GM12878 (cell line): ENCODE measurements at regions of chr10 and their contacts with region 1.

Region 1: DNA sequence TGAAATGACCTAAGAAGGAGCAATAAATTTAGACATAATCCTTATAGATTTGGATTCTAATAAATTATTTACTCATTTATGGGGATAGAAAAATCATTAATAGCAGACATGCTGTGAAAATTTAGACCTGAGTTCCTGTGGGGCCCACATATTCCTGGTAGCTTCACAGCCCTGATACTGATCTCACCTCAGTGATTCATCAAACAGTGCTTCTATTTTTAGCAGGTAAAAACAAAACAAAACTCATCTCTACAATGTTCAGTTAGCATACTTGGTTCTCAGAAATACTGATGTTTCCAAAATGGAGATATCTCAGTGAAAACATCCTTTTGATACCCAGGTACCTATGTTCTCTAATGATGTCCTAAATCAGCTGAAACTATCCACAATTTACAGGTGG is 841.1 kb upstream of the SORCS1 start:
- DNase-seq: no peak
- ATAC-seq: 0 out of 3 replicates have a peak, but pooled peaks have one; percentile 21
- H3K4me3 ChIP-seq: no peak overlapping the region
- H3K27ac ChIP-seq: no peak overlapping the region
- H3K4me1 ChIP-seq: no peaks in the 10 kb centered on the region; the same call in 1 of the 2 replicates
- H3K27me3 ChIP-seq: no peaks in the 10 kb centered on the region
- CTCF ChIP-seq: no peak
- EP300 ChIP-seq: no peak
- POLR2A ChIP-seq: no peak
- RAD21 ChIP-seq: no peak

Region 2: DNA sequence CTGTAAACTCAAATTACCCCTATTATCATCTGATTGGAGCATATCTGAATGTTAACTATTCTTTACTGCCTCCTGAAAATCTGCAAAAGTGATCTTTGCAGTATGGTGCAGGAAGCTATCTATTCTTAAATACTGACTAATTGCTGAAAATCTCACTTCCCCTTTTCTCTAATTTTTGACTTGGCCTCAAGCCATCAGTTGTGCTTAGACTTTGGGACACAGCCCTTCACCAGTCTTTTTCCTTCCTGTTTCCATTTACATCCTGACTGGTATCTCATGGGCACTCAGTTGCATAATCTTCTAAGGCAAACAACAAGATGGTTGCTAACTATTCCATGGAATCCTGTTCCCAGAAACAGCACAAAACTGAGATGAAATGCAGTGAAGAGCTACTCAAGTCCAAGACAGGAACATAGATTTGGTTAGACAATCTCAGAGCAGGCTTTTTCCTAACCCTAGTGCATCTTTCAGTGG is 1069.6 kb before region 1 on chr10:
- CTCF ChIA-PET with region 1: no interaction called
- POLR2A ChIA-PET with region 1: no interaction called
- RAD21 ChIA-PET with region 1: no interaction called
- SMC1A ChIA-PET with region 1: no interaction called
- in situ Hi-C with region 1: no loop called
- intact Hi-C with region 1: loop called (anchors 5 kb)
- DNase-seq: peak; percentile 93
- ATAC-seq: peak; percentile 75
- H3K4me3 ChIP-seq: no peak overlapping the region; the same call in 1 of the 2 replicates
- H3K27ac ChIP-seq: peak overlapping the region; percentile 67
- H3K4me1 ChIP-seq: peaks cover 42% of the 10 kb centered on the region
- H3K27me3 ChIP-seq: no peaks in the 10 kb centered on the region
- CTCF ChIP-seq: no peak
- EP300 ChIP-seq: peak; percentile 38 to 97; a peak in 3 of 4 replicates
- POLR2A ChIP-seq: no peak
- RAD21 ChIP-seq: no peak

Region 3: GRCh38 chr10:107914450-107915214 is 91.0 kb before region 1 on chr10:
- CTCF ChIA-PET with region 1: no interaction called
- POLR2A ChIA-PET with region 1: no interaction called
- RAD21 ChIA-PET with region 1: interaction called, 8 read pairs
- SMC1A ChIA-PET with region 1: interaction called, 10 read pairs
- in situ Hi-C with region 1: no loop called
- intact Hi-C with region 1: loop called (anchors 5 kb)
- DNase-seq: no peak
- ATAC-seq: peak; percentile 73
- H3K4me3 ChIP-seq: no peak overlapping the region
- H3K27ac ChIP-seq: no peak overlapping the region
- H3K4me1 ChIP-seq: no peaks in the 10 kb centered on the region
- H3K27me3 ChIP-seq: no peaks in the 10 kb centered on the region
- CTCF ChIP-seq: no peak; a peak in 1 of 6 replicates
- EP300 ChIP-seq: no peak
- POLR2A ChIP-seq: no peak
- RAD21 ChIP-seq: no peak

Region 4: DNA sequence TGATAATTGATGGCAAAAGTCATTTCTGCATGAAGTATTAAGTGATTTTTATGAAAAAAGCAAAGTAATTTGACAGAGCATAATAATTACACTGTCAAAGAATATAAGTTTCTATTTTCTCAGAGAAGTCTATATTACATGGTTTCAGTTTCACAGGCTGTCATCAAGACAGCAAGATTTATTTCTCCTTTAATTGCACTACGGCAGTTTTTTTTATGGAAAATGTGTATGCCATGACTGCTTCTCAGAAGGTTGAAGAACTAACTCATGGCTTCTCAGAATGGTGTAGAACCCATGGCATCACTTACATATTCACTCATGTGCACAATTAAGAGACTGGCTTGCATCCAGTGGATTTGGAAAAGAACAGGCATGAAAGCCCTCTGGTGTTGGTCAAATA is 29.2 kb after region 1 on chr10:
- CTCF ChIA-PET with region 1: no interaction called
- POLR2A ChIA-PET with region 1: interaction called, 3 read pairs
- RAD21 ChIA-PET with region 1: interaction called, 9 read pairs
- SMC1A ChIA-PET with region 1: interaction called, 12 read pairs
- in situ Hi-C with region 1: no loop called
- intact Hi-C with region 1: no loop called
- DNase-seq: no peak
- ATAC-seq: peak; percentile 63
- H3K4me3 ChIP-seq: no peak overlapping the region
- H3K27ac ChIP-seq: no peak overlapping the region
- H3K4me1 ChIP-seq: no peaks in the 10 kb centered on the region
- H3K27me3 ChIP-seq: no peaks in the 10 kb centered on the region
- CTCF ChIP-seq: no peak
- EP300 ChIP-seq: no peak
- POLR2A ChIP-seq: no peak
- RAD21 ChIP-seq: no peak

Region 5: DNA sequence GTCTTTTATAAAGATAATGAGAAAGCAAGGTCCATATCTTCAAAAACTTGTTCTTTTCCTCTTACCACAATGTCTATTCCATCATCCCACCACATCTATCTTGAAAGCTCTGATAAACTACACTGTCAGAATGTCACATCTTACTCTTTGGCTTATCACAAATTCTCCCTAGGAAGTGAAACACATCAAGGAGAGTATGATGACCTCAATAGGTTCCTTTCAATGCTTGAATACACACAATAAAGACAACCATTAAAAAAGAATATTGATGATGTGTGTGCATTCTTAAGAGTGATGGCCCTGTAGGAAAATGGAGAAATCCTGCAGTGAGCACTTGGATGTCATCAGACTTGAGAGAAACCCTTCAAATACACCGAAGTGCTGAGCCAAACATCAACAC is 77.0 kb after region 1 on chr10:
- CTCF ChIA-PET with region 1: no interaction called
- POLR2A ChIA-PET with region 1: no interaction called
- RAD21 ChIA-PET with region 1: no interaction called
- SMC1A ChIA-PET with region 1: no interaction called
- in situ Hi-C with region 1: no loop called
- intact Hi-C with region 1: loop called (anchors 5 kb)
- DNase-seq: no peak
- ATAC-seq: peak; percentile 73
- H3K4me3 ChIP-seq: no peak overlapping the region
- H3K27ac ChIP-seq: no peak overlapping the region
- H3K4me1 ChIP-seq: no peaks in the 10 kb centered on the region
- H3K27me3 ChIP-seq: no peaks in the 10 kb centered on the region
- CTCF ChIP-seq: no peak
- EP300 ChIP-seq: no peak
- POLR2A ChIP-seq: no peak
- RAD21 ChIP-seq: no peak